Activated B cell treated with CpG ODN at 0.5 μM for 24 hours (primary cell): ENCODE measurements at regions of chr19 and their contacts with region 1.

Region 1: GRCh38 chr19:35269421-35270117 is 807 bp downstream of the USF2 start:
- DNase-seq: peak; percentile 81
- ATAC-seq: peak; percentile 70
- H3K4me3 Mint-ChIP-seq: peak overlapping the region; percentile 66
- H3K27ac Mint-ChIP-seq: peak overlapping the region; percentile 12
- H3K4me1 Mint-ChIP-seq: peaks cover 61% of the 10 kb centered on the region
- H3K27me3 Mint-ChIP-seq: no peaks in the 10 kb centered on the region
- CTCF ChIP-seq: no peak

Region 2: GRCh38 chr19:35140962-35141637 is 128.5 kb before region 1 on chr19:
- CTCF ChIA-PET with region 1: interaction called, 3 read pairs
- POLR2A ChIA-PET with region 1: interaction called, 22 read pairs
- intact Hi-C with region 1: loop called (anchors 2 kb)
- DNase-seq: peak; percentile 87
- ATAC-seq: peak; percentile 86
- H3K4me3 Mint-ChIP-seq: peak overlapping the region; percentile 87
- H3K27ac Mint-ChIP-seq: peak overlapping the region; percentile 77
- H3K4me1 Mint-ChIP-seq: peaks cover 40% of the 10 kb centered on the region
- H3K27me3 Mint-ChIP-seq: no peaks in the 10 kb centered on the region
- CTCF ChIP-seq: no peak

Region 3: GRCh38 chr19:35254341-35255297 is 14.9 kb before region 1 on chr19:
- CTCF ChIA-PET with region 1: no interaction called
- POLR2A ChIA-PET with region 1: interaction called, 15 read pairs
- intact Hi-C with region 1: no loop called
- DNase-seq: no peak
- ATAC-seq: no peak
- H3K4me3 Mint-ChIP-seq: no peak overlapping the region
- H3K27ac Mint-ChIP-seq: no peak overlapping the region
- H3K4me1 Mint-ChIP-seq: peaks cover 10% of the 10 kb centered on the region
- H3K27me3 Mint-ChIP-seq: no peaks in the 10 kb centered on the region
- CTCF ChIP-seq: no peak

Region 4: DNA sequence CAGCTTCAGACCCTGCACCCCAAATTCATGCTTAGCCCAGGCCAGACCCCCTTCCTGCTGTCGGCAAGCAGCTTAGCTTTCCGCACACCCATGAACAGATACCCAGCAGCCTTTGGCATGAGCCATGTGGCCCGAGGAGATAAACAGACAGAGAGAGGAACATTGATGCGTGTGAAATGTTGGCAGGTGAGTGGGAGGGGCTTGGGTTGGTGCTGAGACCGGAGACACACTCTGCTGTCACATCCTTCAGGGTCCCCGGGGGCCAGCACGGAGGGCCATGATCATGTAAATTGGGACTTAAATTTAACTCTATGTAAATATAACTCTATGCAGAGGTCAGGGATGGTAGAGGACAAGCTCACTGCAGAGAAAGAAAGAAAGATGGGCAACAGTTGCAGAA is 60.9 kb after region 1 on chr19:
- CTCF ChIA-PET with region 1: interaction called, 4 read pairs
- POLR2A ChIA-PET with region 1: interaction called, 59 read pairs
- intact Hi-C with region 1: loop called (anchors 1 kb)
- DNase-seq: peak; percentile 76
- ATAC-seq: peak; percentile 81
- H3K4me3 Mint-ChIP-seq: peak overlapping the region; percentile 90
- H3K27ac Mint-ChIP-seq: peak overlapping the region; percentile 94
- H3K4me1 Mint-ChIP-seq: peaks cover 85% of the 10 kb centered on the region
- H3K27me3 Mint-ChIP-seq: no peaks in the 10 kb centered on the region
- CTCF ChIP-seq: no peak

Region 5: GRCh38 chr19:35468637-35469036 is 199.1 kb after region 1 on chr19:
- CTCF ChIA-PET with region 1: interaction called, 6 read pairs
- POLR2A ChIA-PET with region 1: interaction called, 5 read pairs
- intact Hi-C with region 1: loop called (anchors 1 kb)
- DNase-seq: peak; percentile 51
- ATAC-seq: peak; percentile 100
- H3K4me3 Mint-ChIP-seq: no peak overlapping the region
- H3K27ac Mint-ChIP-seq: no peak overlapping the region
- H3K4me1 Mint-ChIP-seq: peaks cover 14% of the 10 kb centered on the region
- H3K27me3 Mint-ChIP-seq: no peaks in the 10 kb centered on the region
- CTCF ChIP-seq: peak; percentile 39